Activated CD4-positive, alpha-beta T cell treated with anti-CD3 and anti-CD28 coated beads for 36 hours (primary cell): ENCODE measurements at regions of chr17 and their contacts with region 1.

Region 1: DNA sequence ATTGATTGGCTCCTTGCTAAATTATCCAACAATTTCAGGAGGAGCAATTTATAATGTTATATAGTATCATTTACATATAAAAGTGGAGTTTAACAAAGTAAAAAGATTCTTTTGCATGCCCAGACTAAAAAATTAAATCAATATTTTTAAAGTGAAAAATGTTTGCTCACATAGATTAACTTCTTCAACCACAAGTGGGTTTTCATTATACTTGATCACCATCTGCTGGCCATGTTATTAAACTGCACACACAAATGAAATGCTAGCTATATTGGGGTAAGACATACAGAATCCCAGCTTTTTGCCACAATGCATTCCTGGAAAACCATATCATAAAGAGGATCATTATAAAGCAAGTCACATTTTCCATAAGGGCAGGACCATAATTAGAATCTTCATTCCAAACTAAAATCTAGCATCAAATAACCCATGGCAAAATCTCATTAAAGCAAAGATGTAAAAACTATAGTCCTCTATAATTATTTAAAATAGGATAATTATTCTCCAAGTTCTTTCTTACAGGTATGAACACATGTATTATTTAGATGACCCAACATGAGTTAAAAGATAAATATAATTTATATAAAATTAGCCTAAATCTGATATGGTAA is 26.3 kb downstream of the CEP112 start:
- DNase-seq: no peak
- ATAC-seq: no peak
- H3K4me3 Mint-ChIP-seq: no peak overlapping the region
- H3K27ac Mint-ChIP-seq: no peak overlapping the region
- H3K4me1 Mint-ChIP-seq: peaks cover 10% of the 10 kb centered on the region
- H3K27me3 Mint-ChIP-seq: no peaks in the 10 kb centered on the region

Region 2: DNA sequence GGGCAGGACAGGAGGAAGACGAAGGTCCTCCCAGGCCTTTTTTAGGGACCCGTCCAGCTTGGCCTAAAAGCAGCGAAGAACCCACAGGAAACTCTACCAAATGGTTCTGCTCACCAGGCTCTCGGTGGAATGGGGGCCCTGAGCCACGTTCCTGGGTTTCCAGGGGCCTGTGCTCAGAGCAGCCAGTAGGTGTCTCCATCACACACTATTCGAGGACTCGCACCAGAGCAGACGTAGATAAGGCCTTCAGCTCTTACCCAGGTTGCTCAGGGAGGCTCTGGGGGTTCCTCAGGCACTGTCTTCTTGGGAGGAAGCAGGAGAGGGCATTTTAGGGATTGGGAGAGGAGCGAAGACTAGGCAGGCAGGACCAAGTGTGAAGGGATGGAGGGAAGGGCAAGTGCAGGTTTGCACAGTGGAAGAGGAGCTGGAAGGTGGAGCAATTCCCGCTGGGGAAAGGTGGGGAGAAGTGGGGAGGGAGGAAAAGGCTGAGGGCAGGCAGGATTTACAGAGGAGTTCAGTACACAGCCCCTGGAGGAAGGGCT is 871.4 kb before region 1 on chr17:
- CTCF ChIA-PET with region 1: interaction called, 23 read pairs
- POLR2A ChIA-PET with region 1: no interaction called
- intact Hi-C with region 1: loop called (anchors 1 kb)
- DNase-seq: peak; percentile 76
- ATAC-seq: peak; percentile 95
- H3K4me3 Mint-ChIP-seq: no peak overlapping the region
- H3K27ac Mint-ChIP-seq: no peak overlapping the region
- H3K4me1 Mint-ChIP-seq: peaks cover 2% of the 10 kb centered on the region
- H3K27me3 Mint-ChIP-seq: no peaks in the 10 kb centered on the region

Region 3: GRCh38 chr17:65455972-65456343 is 709.7 kb before region 1 on chr17:
- CTCF ChIA-PET with region 1: no interaction called
- POLR2A ChIA-PET with region 1: no interaction called
- intact Hi-C with region 1: loop called in 1 of 2 experiments (anchors 1 kb)
- DNase-seq: peak; percentile 34
- ATAC-seq: peak; percentile 33
- H3K4me3 Mint-ChIP-seq: no peak overlapping the region
- H3K27ac Mint-ChIP-seq: no peak overlapping the region
- H3K4me1 Mint-ChIP-seq: peaks cover 6% of the 10 kb centered on the region
- H3K27me3 Mint-ChIP-seq: no peaks in the 10 kb centered on the region

Region 4: DNA sequence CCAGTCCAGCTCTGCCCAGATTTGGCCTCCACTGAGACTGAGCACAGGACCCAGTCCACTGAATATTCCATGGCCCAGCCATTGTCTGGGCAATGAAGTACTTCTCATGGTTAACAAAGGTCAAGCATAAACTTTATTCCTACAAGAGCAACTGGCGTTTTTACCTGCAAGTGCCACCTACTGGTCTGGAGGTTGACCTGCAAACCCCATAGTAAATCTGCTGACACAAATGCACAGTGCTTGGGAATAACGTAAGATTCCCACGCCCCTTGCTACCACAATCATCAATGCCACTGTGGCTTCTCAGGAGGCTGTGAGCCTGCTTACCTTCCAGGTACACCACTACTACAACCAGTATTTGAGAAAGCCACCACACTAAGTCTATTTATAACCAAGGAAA is 143.8 kb before region 1 on chr17:
- CTCF ChIA-PET with region 1: no interaction called
- POLR2A ChIA-PET with region 1: no interaction called
- intact Hi-C with region 1: no loop called
- DNase-seq: no peak
- ATAC-seq: no peak
- H3K4me3 Mint-ChIP-seq: no peak overlapping the region
- H3K27ac Mint-ChIP-seq: no peak overlapping the region
- H3K4me1 Mint-ChIP-seq: no peaks in the 10 kb centered on the region
- H3K27me3 Mint-ChIP-seq: no peaks in the 10 kb centered on the region

Region 5: DNA sequence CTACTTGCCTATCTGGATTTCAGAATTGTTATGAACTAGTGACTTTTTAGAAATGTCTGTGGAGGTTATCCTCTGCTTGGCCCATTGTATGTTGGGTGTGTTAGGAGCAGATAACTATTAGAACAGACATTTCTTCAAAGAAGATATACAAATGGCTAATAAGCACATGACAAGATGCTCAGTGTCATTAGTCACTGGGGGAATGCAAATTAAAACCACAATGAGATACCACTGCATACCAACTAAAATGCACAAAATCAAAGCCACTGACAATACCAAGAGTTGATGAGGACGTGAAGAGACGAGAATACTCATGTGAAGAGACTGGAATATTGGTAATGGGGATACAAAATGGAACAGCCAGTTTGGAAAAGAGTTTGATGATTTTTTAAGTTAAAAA is 12.9 kb before region 1 on chr17:
- CTCF ChIA-PET with region 1: interaction called, 20 read pairs
- POLR2A ChIA-PET with region 1: no interaction called
- intact Hi-C with region 1: no loop called
- DNase-seq: no peak
- ATAC-seq: no peak
- H3K4me3 Mint-ChIP-seq: no peak overlapping the region
- H3K27ac Mint-ChIP-seq: no peak overlapping the region
- H3K4me1 Mint-ChIP-seq: peaks cover 9% of the 10 kb centered on the region
- H3K27me3 Mint-ChIP-seq: peaks cover 2% of the 10 kb centered on the region